ENCODE measurements at regions of chr15 and their contacts with region 1.

Region 1: DNA sequence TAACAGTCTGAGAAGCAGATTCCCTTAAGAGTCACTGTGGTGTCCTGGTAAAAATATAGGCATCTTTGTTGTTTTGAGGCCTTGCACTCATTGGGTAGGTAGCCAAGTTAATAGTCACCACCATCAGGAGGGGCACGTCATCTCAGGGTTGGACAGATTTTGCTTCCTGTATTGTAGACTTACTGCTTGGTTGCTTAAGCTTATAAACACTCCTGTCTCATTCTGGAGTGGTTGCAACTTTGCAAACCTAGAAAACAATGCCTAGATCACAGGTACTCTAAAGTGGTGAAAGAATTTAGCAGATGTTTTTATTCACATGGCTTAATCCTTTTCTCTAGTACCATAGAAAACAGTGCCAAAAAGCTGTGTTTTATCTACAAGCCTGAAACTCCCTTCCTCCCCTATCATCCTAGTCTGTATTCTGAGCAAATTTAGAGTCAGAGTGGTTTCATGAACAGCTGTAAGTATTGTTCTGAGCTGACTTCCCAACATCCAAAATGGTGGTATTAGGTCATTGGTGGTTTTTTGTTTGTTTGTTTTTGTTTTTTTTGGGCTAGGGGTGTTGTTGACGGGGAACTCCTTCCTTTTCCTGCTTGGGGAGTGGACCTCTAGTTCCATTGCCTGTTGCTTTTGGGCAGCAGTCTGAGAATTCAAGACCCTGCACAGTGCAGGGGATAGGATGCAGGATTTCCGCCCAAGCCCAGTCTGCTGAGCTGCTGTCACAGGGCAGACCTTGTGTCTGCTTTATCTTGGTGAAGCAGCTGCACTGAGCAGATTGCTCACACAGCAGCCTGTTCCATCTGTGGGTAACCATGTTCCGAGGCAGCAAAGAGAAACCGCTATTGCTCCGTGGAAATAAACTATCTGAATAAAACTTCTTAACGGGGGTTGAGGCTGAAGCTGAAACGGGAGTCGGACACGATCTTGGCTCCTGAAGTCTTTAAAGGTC is 202.0 kb downstream of the AKAP13 start:
- DNase-seq: peak; percentile 74 to 83 (median 80)
- ATAC-seq: peak; percentile 53 to 76 (median 61)
- H3K4me3 ChIP-seq: peak overlapping the region; percentile 29 to 66 (median 53)
- H3K27ac ChIP-seq: peak overlapping the region; percentile 82 to 96 (median 88)
- H3K4me1 ChIP-seq: peaks cover 17 to 96% (median 78%) of the 10 kb centered on the region in 12 donors
- H3K27me3 ChIP-seq: no peaks in the 10 kb centered on the region
- CTCF ChIP-seq: no peak
- POLR2A ChIP-seq: peak in 1 of 2 donors; percentile 50

Region 2: DNA sequence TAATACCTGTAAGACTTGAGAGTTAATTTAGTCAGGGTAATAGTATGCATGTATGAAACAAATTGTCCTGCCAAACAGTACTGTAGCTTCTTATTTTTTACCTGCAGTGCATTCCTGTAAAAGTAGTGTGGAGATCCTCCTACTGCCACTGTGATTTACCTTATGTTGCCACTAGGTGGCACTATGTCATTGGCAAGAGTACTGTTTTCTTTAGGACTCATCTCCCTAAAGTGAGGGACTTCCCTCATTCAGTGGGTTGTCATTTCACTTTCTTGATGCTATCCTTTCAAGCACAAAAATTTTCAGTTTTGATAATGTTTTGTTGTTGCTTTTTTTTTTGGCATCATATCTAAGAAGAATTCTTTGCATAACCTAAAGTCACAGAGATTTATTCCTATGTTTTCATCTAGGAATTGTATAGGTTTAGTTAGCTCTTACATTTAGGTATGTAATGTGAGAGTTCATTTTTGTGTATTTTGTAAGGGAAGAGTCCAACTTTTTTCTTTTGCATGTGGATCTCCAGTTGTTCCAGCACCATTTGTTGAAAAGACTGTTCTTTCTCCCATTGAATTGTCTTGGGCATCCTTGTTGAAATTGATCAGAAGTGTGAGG is 96.3 kb before region 1 on chr15:
- intact Hi-C with region 1: loop called in 3 of 10 experiments (anchors 2 to 10 kb)
- DNase-seq: peak in 2 of 5 donors; percentile 49 to 62
- ATAC-seq: peak; percentile 47 to 79 (median 73)
- H3K4me3 ChIP-seq: no peak overlapping the region
- H3K27ac ChIP-seq: peak overlapping the region in 1 of 12 donors; percentile 41
- H3K4me1 ChIP-seq: peaks cover 0 to 80% (median 42%) of the 10 kb centered on the region in 12 donors
- H3K27me3 ChIP-seq: no peaks in the 10 kb centered on the region
- CTCF ChIP-seq: peak; percentile 58 to 92 (median 86)
- POLR2A ChIP-seq: no peak

Region 3: DNA sequence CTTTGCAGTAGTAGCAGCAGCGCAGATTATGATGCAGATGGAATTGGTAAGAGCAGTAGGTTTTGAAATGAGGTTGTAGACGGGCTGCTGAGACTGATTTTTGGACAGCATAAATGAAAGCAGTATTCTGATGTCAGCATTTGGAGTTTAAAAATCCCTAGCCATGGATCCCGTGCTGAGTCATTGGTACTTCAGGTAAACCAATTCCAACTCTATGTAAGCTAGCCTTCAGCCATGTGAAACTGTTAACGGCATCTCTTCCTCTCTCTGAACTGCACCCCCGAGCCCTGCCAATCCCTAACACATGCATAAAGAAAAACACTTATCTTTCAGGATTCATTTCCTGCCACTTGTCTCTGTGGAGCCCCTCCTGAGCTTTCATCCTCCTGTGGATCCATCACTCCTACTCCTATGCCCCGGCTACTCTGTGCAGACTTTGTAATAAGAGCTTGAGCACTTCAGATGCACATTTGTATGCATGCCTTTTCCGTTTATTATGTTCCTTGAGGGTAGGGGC is 83.0 kb before region 1 on chr15:
- intact Hi-C with region 1: loop called in 4 of 10 experiments (anchors 5 to 10 kb)
- DNase-seq: no peak
- ATAC-seq: peak in 1 of 4 donors; percentile 5
- H3K4me3 ChIP-seq: peak overlapping the region in 1 of 12 donors; percentile 7
- H3K27ac ChIP-seq: peak overlapping the region in 10 of 12 donors; percentile 53 to 83 (median 66)
- H3K4me1 ChIP-seq: peaks cover 14 to 99% (median 80%) of the 10 kb centered on the region in 12 donors
- H3K27me3 ChIP-seq: no peaks in the 10 kb centered on the region
- CTCF ChIP-seq: no peak
- POLR2A ChIP-seq: no peak

Region 4: GRCh38 chr15:85543741-85544155 is 38.7 kb before region 1 on chr15:
- intact Hi-C with region 1: loop called in 2 of 10 experiments (anchors 5 kb)
- DNase-seq: peak; percentile 60 to 80 (median 77)
- ATAC-seq: peak; percentile 48 to 85 (median 67)
- H3K4me3 ChIP-seq: peak overlapping the region in 8 of 12 donors; percentile 1 to 47 (median 10)
- H3K27ac ChIP-seq: peak overlapping the region; percentile 1 to 93 (median 37)
- H3K4me1 ChIP-seq: peaks cover 0 to 95% (median 56%) of the 10 kb centered on the region in 12 donors
- H3K27me3 ChIP-seq: no peaks in the 10 kb centered on the region
- CTCF ChIP-seq: peak in 8 of 12 donors; percentile 6 to 49 (median 37)
- POLR2A ChIP-seq: no peak

Region 5: GRCh38 chr15:85707519-85708338 is 125.3 kb after region 1 on chr15:
- intact Hi-C with region 1: loop called in 1 of 10 experiments (anchors 5 kb)
- DNase-seq: peak in 1 of 5 donors; percentile 35
- ATAC-seq: peak; percentile 25 to 48 (median 28)
- H3K4me3 ChIP-seq: peak overlapping the region in 9 of 12 donors; percentile 10 to 46 (median 21)
- H3K27ac ChIP-seq: peak overlapping the region; percentile 70 to 97 (median 86)
- H3K4me1 ChIP-seq: peaks cover 3 to 87% (median 63%) of the 10 kb centered on the region in 12 donors
- H3K27me3 ChIP-seq: no peaks in the 10 kb centered on the region
- CTCF ChIP-seq: no peak
- POLR2A ChIP-seq: no peak

Region 6: DNA sequence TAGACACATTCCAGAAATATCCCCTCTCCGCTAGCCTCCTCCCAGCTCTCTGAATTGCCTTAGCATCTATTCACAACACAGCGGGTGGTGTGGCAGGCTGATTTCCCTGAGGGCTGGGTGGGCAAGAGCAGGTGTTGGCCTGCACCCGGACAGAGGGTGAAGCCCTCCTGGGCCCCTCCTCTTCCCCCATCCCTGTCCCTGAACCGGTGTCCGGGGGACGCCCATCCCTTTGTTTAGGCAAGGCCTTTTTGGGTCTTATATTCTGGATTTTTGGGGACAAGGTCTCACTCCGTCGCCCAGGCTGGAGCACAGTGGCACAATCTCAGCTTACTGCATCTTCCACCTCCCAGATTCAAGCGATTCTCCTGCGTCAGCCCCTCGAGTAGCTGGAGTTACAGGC is 267.5 kb after region 1 on chr15:
- intact Hi-C with region 1: no loop called
- DNase-seq: no peak
- ATAC-seq: peak in 1 of 4 donors; percentile 21
- H3K4me3 ChIP-seq: no peak overlapping the region
- H3K27ac ChIP-seq: no peak overlapping the region
- H3K4me1 ChIP-seq: no peaks in the 10 kb centered on the region
- H3K27me3 ChIP-seq: peaks cover 0 to 18% (median 4%) of the 10 kb centered on the region in 9 donors
- CTCF ChIP-seq: no peak
- POLR2A ChIP-seq: no peak